ENCODE measurements at regions of chr1 and their contacts with region 1.

Region 1: DNA sequence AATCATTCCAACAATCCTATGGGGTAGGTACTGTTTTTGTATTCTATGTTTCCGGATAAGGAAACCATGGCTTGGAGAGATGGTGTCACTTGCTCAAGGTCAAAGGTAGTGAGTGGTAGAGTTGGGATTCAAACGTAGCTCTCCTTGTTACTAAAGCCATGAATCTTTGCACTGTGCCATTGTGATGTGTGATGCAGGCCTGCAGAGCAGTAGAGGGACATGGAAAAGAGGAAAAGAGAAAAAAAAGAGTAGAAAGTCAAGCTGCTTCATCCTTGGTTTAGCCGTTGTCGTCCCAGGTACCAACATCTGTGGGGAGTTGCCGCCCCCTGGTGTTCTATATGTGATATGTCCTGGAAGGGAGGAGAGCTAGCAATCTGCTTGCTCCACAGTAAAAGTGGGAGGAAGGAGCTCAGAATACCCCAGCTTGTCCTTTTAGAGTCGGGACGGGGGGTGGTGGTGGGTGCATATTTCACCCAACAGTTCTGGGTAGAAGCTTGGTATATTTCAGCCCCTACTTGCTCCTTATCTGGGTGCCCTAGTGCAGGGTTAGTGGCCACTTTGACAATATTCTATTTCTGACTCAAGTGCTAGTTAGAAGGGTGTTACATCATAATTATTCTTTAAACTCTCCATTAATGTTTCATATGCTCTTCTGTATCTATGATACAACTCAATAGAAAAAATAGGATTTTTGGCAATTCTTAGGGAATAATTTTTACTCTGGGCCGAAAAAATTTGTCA is 98.4 kb downstream of the EBNA1BP2 start:
- DNase-seq: peak; percentile 71
- H3K4me3 ChIP-seq: no peak overlapping the region
- H3K27ac ChIP-seq: no peak overlapping the region
- H3K27me3 ChIP-seq: no peaks in the 10 kb centered on the region
- CTCF ChIP-seq: peak; percentile 84

Region 2: DNA sequence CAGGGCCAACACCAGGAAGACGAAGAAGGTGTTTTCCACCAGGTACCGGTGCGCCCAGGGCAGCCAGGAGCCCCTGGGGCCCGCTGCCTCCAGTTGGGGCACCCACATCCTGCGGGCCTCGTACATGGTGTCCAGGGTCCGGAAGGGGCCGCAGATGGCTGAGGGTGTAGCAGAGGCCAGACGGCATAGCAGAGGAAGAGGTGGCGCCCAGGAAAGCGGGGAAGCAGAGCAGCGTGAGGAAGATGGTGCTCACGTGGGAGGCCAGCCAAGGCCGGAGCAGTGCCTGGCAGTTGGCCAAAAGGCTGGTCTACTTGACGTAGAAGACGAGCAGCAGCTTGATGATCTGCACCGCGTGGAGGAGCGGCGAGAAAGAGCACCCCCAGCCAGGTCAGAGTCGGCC is 186.9 kb before region 1 on chr1:
- in situ Hi-C with region 1: no loop called
- DNase-seq: no peak
- H3K4me3 ChIP-seq: no peak overlapping the region
- H3K27ac ChIP-seq: no peak overlapping the region
- H3K27me3 ChIP-seq: no peaks in the 10 kb centered on the region
- CTCF ChIP-seq: no peak

Region 3: DNA sequence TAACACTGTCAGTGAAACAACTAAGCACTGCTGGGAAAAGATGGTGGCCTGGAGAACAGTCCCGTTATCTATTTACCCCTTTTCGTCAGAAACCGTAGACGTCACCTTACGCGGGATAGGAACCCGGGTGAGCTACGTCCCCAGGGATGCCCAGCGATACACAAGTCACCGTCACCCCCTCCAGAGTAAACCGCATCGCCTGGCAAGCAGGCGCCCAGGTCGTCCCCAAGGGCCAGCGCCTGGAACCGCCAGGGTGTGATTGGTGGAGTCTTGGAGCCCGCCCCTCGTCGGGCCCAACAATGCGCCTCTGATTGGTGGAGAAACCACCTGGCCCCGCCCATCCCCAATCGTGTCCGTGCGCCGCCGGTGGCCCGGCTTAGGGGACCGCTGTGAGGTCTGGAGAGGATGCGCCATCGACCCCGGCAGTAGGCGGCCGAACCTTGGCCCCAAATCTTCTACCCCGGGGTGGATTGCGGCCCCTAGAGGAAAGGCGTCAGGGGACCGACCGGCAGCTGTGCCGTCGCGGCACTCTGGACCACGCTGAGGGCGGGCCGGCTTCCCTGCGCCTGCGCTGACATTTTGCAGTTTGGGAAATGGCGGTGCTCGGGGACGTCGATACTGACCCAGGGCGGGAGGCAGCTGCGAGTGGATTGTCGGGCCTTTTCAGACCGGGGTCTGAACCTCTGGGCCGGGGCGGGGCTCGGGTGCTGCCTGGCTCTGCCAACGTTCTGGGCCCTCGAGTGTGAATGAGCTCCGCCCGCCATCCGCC is 149.4 kb before region 1 on chr1:
- in situ Hi-C with region 1: loop called (anchors 25 kb)
- DNase-seq: peak; percentile 81
- H3K4me3 ChIP-seq: peak overlapping the region; percentile 71
- H3K27ac ChIP-seq: peak overlapping the region; percentile 60
- H3K27me3 ChIP-seq: no peaks in the 10 kb centered on the region
- CTCF ChIP-seq: peak; percentile 26

Region 4: GRCh38 chr1:43008115-43009060 is 65.3 kb before region 1 on chr1:
- in situ Hi-C with region 1: no loop called
- DNase-seq: no peak
- H3K4me3 ChIP-seq: no peak overlapping the region
- H3K27ac ChIP-seq: no peak overlapping the region
- H3K27me3 ChIP-seq: no peaks in the 10 kb centered on the region
- CTCF ChIP-seq: peak; percentile 25

Region 5: GRCh38 chr1:43256675-43257570 is 183.3 kb after region 1 on chr1:
- in situ Hi-C with region 1: no loop called
- DNase-seq: no peak
- H3K4me3 ChIP-seq: no peak overlapping the region
- H3K27ac ChIP-seq: no peak overlapping the region
- H3K27me3 ChIP-seq: no peaks in the 10 kb centered on the region
- CTCF ChIP-seq: no peak

Region 6: GRCh38 chr1:43529206-43529731 is 455.6 kb after region 1 on chr1:
- in situ Hi-C with region 1: no loop called
- DNase-seq: peak; percentile 87
- H3K4me3 ChIP-seq: no peak overlapping the region
- H3K27ac ChIP-seq: no peak overlapping the region
- H3K27me3 ChIP-seq: no peaks in the 10 kb centered on the region
- CTCF ChIP-seq: peak; percentile 97